OCI-LY7 (cell line): ENCODE measurements at regions of chr15 and their contacts with region 1.

Region 1: GRCh38 chr15:31326156-31326732 is 391 bp upstream of the KLF13 start:
- DNase-seq: peak; percentile 99
- H3K4me3 ChIP-seq: peak overlapping the region; percentile 81
- H3K27ac ChIP-seq: peak overlapping the region; percentile 94
- H3K4me1 ChIP-seq: peaks cover 46% of the 10 kb centered on the region
- CTCF ChIP-seq: no peak; the same call in 1 of the 2 replicates

Region 2: DNA sequence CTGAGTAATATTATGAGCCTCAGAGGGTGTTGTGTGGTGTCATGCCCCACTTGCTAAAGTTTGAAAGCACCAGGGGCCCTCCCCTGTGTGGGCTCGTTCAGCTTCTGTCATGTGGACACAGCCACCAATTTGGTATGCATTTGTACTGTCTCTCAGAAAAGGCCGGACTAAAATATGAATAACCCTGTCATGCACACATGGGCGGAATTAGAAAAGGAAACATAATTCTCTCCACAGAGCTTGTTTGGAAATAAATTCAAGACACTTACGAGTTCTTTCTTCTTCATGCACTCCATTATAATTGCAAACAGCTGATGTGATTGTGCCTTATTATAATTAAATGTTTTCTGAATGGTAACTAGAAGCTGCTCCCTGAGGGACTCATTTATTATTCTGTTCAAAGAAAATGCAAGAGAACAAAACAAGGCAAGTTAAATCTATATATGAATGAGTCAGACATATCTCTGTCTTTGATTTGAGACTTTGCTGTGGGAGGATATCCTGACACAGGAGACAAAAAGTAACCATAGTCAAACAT is 263.9 kb before region 1 on chr15:
- CTCF ChIA-PET with region 1: no interaction called
- POLR2A ChIA-PET with region 1: no interaction called
- intact Hi-C with region 1: no loop called
- DNase-seq: no peak
- H3K4me3 ChIP-seq: no peak overlapping the region
- H3K27ac ChIP-seq: no peak overlapping the region
- H3K4me1 ChIP-seq: no peaks in the 10 kb centered on the region
- CTCF ChIP-seq: no peak

Region 3: GRCh38 chr15:31215490-31216214 is 110.6 kb before region 1 on chr15:
- CTCF ChIA-PET with region 1: no interaction called
- POLR2A ChIA-PET with region 1: no interaction called
- intact Hi-C with region 1: loop called (anchors 1 kb)
- DNase-seq: peak; percentile 87
- H3K4me3 ChIP-seq: peak overlapping the region; percentile 70
- H3K27ac ChIP-seq: peak overlapping the region; percentile 82
- H3K4me1 ChIP-seq: peaks cover 49% of the 10 kb centered on the region
- CTCF ChIP-seq: peak; percentile 83

Region 4: DNA sequence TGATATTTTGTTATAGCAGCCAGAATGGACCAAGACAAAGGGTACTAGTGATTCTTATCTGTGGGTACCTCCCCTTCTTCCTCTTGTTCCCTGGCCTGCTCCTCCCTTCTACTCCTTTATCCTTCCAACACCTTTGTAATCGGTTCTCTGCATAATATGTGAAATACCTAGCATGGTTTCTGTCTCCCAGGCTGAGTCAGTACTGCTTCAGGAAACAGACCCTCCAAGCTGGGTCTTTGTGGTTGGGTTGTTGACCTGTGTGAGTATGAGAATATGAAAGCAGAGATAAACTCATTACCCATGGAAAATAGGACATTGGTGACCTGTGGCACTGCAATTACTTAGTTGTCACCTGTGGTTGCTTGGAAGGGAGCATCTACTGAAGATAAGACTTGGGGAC is 69.0 kb before region 1 on chr15:
- CTCF ChIA-PET with region 1: no interaction called
- POLR2A ChIA-PET with region 1: no interaction called
- intact Hi-C with region 1: no loop called
- DNase-seq: no peak
- H3K4me3 ChIP-seq: no peak overlapping the region
- H3K27ac ChIP-seq: no peak overlapping the region
- H3K4me1 ChIP-seq: peaks cover 61% of the 10 kb centered on the region
- CTCF ChIP-seq: no peak

Region 5: DNA sequence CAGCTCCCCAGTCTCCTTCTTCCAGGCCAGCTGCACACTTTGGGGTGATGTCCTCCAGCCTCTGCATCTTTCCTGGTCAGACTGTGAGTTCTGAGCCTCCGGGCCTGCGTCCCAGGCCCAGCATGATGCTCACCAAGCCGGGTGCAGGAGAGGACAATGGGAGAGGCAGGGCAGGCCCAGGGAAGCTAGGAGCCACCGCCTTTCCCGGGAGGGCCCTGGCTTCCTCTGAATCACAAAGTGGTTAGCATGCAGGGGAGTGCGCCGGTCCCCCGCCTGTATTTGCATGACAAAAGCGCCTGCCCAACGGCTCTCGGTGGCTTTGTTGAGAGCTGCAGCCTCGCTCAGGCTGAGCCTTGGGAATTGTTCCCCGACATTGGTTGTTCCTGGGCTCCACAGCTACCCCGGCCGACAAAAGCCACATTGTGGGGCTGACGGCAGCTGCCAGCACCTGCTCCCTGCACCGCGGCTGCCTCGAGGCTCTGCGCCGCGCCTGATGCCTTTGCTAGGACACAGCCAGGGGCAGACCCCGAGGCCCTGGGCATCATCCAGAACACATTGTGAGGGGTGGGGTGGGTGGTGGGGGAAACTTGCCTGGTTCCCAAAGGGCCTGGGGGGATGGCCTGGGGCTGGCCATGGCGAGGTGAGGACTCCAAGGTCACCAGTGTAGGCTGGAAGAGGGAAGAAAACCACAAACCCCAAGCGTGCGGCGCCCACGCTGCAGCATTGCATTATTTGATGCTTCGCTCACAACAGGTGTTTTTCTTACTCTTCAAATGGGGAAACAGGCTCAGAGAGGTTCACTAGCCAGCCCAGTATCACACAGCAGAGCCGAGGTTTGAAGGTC is 19.6 kb before region 1 on chr15:
- CTCF ChIA-PET with region 1: interaction called, 6 read pairs
- POLR2A ChIA-PET with region 1: interaction called, 15 read pairs
- intact Hi-C with region 1: loop called (anchors 1 kb)
- DNase-seq: peak; percentile 87
- H3K4me3 ChIP-seq: peak overlapping the region; percentile 56
- H3K27ac ChIP-seq: peak overlapping the region; percentile 87
- H3K4me1 ChIP-seq: peaks cover 90% of the 10 kb centered on the region
- CTCF ChIP-seq: no peak

Region 6: GRCh38 chr15:31360843-31361763 is 34.9 kb after region 1 on chr15:
- CTCF ChIA-PET with region 1: no interaction called
- POLR2A ChIA-PET with region 1: interaction called, 3 read pairs
- intact Hi-C with region 1: loop called (anchors 1 kb)
- DNase-seq: peak; percentile 97
- H3K4me3 ChIP-seq: peak overlapping the region; percentile 61
- H3K27ac ChIP-seq: peak overlapping the region; percentile 98
- H3K4me1 ChIP-seq: peaks cover 98% of the 10 kb centered on the region
- CTCF ChIP-seq: no peak

Region 7: DNA sequence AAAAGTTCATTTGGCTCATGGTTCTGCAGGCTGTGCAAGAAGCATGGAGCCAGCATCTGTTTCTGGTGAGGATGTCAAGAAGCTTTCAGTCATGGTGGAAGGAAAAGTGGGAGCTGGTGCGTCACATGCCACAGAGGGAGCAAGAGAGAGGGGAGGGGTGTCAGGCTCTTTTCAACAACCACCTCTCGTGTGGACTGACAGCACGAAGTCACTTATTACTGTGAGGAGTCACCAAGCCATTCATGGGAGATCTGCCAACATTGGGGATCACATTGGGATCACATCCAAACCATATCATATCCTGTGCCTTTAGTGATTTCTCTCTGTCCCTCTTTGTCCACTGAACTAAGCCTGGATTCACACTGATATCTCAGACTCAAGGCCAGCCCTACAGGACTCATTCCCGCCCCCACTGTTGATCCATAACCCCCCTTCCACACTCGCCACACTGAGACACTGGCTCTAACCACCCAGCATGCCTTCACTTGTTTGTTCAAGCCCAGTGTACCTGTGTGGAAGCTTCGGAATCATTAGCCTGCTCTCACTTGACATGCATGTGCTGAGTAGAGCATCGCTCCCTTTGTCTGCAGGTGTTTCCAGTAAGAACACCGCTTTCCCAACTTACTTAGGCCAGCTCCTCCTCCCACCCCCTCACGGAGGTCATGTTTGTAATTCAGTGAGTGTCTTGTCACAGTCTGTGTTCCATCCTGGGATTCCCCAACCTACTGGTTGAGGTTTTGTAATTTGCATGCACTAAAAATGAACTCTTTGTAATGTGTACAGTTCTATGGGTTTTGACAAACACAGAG is 132.6 kb after region 1 on chr15:
- CTCF ChIA-PET with region 1: no interaction called
- POLR2A ChIA-PET with region 1: interaction called, 3 read pairs
- intact Hi-C with region 1: loop called (anchors 2 kb)
- DNase-seq: peak; percentile 88
- H3K4me3 ChIP-seq: peak overlapping the region; percentile 62
- H3K27ac ChIP-seq: peak overlapping the region; percentile 96
- H3K4me1 ChIP-seq: peaks cover 95% of the 10 kb centered on the region
- CTCF ChIP-seq: no peak